ENCODE measurements at regions of chrX and their contacts with region 1.

Region 1: DNA sequence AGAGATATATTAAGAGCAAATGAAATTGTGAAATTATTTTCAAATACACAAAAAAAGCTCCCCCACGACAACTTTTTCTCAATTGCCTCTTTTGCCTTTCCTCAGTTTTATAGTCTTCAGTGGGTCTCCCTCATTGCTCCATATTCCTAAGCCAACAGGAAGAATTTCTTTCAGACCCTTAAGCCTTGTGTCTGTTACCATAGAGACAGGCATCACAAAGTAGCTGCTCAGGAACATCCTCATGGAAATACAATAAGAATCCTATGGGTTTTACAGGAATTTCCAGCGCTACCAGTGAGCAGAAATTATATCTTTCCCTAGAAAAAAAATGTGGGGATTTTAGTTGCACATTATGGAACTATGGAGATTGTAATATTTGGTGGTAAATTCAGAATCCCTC is 121.9 kb upstream of the DMD start:
- DNase-seq: no peak
- H3K4me3 ChIP-seq: no peak overlapping the region
- H3K27ac ChIP-seq: no peak overlapping the region
- H3K4me1 ChIP-seq: no peaks in the 10 kb centered on the region
- H3K27me3 ChIP-seq: no peaks in the 10 kb centered on the region
- CTCF ChIP-seq: no peak

Region 2: DNA sequence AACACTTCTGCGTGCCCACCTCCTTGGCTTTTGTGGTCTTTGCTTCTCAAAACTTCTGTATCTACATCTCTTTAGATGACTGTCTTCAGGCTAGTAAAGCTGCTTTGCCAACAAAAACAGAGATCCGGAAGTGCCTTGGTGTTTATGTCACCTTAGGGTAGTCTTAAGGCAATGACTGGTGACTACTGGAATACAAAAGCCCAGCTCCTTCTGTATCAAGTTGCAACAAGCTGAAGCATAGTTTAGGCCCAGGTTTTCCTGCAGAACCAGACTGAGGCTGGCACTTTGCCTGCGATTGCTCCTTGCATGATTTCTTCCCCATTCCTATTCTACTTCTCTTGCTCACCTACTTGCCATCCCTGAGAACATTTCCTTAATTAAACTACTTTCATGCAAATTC is 455.7 kb before region 1 on chrX:
- intact Hi-C with region 1: loop called (anchors 5 kb)
- DNase-seq: peak in 1 of 5 donors; percentile 12
- H3K4me3 ChIP-seq: no peak overlapping the region
- H3K27ac ChIP-seq: no peak overlapping the region
- H3K4me1 ChIP-seq: no peaks in the 10 kb centered on the region
- H3K27me3 ChIP-seq: no peaks in the 10 kb centered on the region
- CTCF ChIP-seq: no peak

Region 3: GRCh38 chrX:33211356-33212260 is 121.7 kb before region 1 on chrX and contains the start of gene DMD:
- intact Hi-C with region 1: no loop called
- DNase-seq: peak in 4 of 5 donors; percentile 19 to 74 (median 45)
- H3K4me3 ChIP-seq: peak within 1 kb of the TSS in 2 of 3 donors; percentile 36 to 43
- H3K27ac ChIP-seq: peak within 1 kb of the TSS in 1 of 2 donors; percentile 53
- H3K4me1 ChIP-seq: no peaks in the 10 kb centered on the region
- H3K27me3 ChIP-seq: no peaks in the 10 kb centered on the region
- CTCF ChIP-seq: no peak
- total RNA-seq, gene DMD: 17.9 TPM

Region 4: GRCh38 chrX:33416273-33416805 is 83.1 kb after region 1 on chrX:
- intact Hi-C with region 1: no loop called
- DNase-seq: no peak
- H3K4me3 ChIP-seq: no peak overlapping the region
- H3K27ac ChIP-seq: no peak overlapping the region
- H3K4me1 ChIP-seq: no peaks in the 10 kb centered on the region
- H3K27me3 ChIP-seq: no peaks in the 10 kb centered on the region
- CTCF ChIP-seq: no peak

Measured in kidney (tissue), 22 donors.